Activated CD4-positive, alpha-beta memory T cell treated with anti-CD3 and anti-CD28 coated beads, Interleukin-2, amount 10 ng/mL, durations not matched to agents 7 days and 5 days (primary cell): ENCODE measurements at regions of chr12 and their contacts with region 1.

Region 1: GRCh38 chr12:9797722-9798619 is 29.3 kb upstream of the KLRF1 start:
- DNase-seq: peak; percentile 76
- H3K4me3 Mint-ChIP-seq: no peak overlapping the region
- H3K27ac Mint-ChIP-seq: peak overlapping the region; percentile 92
- H3K4me1 Mint-ChIP-seq: peaks cover 47% of the 10 kb centered on the region
- H3K27me3 Mint-ChIP-seq: peaks cover 15% of the 10 kb centered on the region

Region 2: GRCh38 chr12:9773216-9773877 is 24.6 kb before region 1 on chr12:
- CTCF ChIA-PET with region 1: interaction called, 4 read pairs
- POLR2A ChIA-PET with region 1: interaction called, 12 read pairs
- DNase-seq: no peak
- H3K4me3 Mint-ChIP-seq: peak overlapping the region; percentile 41
- H3K27ac Mint-ChIP-seq: peak overlapping the region; percentile 71
- H3K4me1 Mint-ChIP-seq: peaks cover 83% of the 10 kb centered on the region
- H3K27me3 Mint-ChIP-seq: no peaks in the 10 kb centered on the region

Region 3: DNA sequence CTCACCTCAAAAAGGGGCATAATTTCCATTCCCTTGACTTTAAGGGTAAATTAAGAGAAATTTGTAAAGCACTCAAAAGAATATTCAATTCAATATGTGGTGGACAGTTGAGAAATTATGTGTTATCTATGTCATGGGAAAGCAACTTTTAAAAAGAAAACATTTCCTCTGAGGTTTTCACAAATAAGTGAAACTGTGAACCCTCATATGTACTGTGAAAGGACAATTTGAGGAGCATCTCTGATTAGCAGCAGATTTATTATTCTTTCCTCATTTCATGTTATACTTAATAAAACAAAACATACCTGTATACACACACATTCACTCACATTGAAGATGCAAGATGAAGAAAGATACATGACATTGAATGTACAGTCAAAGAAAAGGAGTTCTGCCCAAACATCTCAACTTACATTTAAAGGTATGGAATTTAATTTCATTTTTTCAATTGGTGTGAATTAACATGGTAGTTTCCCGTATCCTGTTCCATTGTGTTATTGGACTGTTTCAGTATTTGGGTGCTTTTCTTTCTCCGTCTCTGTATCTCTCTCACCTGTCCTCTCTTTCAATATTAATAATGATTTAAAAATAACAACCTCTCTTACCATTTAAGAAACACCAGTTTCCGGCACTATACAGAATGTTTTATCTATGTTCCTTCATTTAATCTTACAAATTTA is 29.4 kb after region 1 on chr12 and contains the start of gene KLRF1:
- CTCF ChIA-PET with region 1: no interaction called
- POLR2A ChIA-PET with region 1: no interaction called
- DNase-seq: no peak
- H3K4me3 Mint-ChIP-seq: no peak within 1 kb of the TSS
- H3K27ac Mint-ChIP-seq: no peak within 1 kb of the TSS
- H3K4me1 Mint-ChIP-seq: no peaks in the 10 kb centered on the region
- H3K27me3 Mint-ChIP-seq: peaks cover 29% of the 10 kb centered on the region
- total RNA-seq, gene KLRF1: 0.38 to 0.48 TPM

Region 4: DNA sequence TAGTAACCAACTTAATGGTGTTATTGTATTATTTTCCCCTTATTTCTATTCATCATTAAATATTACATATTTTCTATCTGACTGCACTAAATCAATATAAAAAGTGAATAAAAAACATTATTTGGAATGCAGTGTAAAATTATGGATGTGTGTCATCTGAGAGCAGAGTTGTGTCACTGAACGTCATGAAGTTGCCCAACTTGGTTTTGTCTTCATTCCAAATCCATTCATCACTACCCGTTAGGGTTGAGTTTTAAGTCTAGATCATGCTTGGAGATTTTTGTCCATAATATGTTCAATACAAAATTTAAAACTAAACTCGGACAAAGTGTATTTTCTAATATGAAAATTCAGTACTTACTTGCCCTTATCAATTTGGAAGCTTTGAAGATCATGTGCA is 45.4 kb after region 1 on chr12:
- CTCF ChIA-PET with region 1: no interaction called
- POLR2A ChIA-PET with region 1: no interaction called
- DNase-seq: no peak
- H3K4me3 Mint-ChIP-seq: no peak overlapping the region
- H3K27ac Mint-ChIP-seq: no peak overlapping the region
- H3K4me1 Mint-ChIP-seq: no peaks in the 10 kb centered on the region
- H3K27me3 Mint-ChIP-seq: peaks cover 25% of the 10 kb centered on the region

Region 5: GRCh38 chr12:9869307-9870161 is 71.6 kb after region 1 on chr12 and contains the start of gene CLEC2B:
- CTCF ChIA-PET with region 1: interaction called, 5 read pairs
- POLR2A ChIA-PET with region 1: interaction called, 61 read pairs
- DNase-seq: no peak
- H3K4me3 Mint-ChIP-seq: peak within 1 kb of the TSS; percentile 85
- H3K27ac Mint-ChIP-seq: peak within 1 kb of the TSS; percentile 92
- H3K4me1 Mint-ChIP-seq: peaks cover 19% of the 10 kb centered on the region
- H3K27me3 Mint-ChIP-seq: no peaks in the 10 kb centered on the region
- total RNA-seq, gene CLEC2B: 79.6 to 79.7 TPM